HepG2 (cell line): ENCODE measurements at regions of chr9 and their contacts with region 1.

Region 1: DNA sequence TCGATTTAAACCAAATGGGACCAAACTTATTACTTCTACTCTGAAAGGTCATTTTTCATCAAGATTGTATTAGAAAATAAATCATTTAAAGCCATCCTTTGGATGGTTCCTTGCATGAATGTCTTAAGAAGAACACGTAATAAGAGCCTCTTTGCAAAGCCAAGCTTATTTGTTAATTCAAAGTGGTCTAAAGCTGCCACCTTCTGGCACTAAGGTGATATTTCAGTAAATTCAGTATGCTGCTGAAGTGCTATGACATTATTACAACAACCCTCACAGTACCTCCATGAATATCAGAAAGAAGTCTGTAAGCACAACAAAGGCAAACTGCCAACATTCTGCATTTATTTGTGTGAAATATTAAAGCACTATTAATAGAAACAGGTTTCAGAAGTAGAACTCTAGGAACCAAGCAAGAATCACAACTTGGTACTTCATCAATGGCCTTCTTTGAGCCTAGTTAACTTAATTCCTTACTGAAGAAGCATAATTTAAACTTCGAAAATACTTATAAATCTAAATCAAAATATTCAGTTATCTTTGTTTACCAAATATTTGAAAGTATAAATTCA is 53.1 kb upstream of the TYRP1 start:
- DNase-seq: peak; percentile 27
- ATAC-seq: peak; percentile 69; the same call in 2 of the 3 replicates
- H3K4me3 ChIP-seq: no peak overlapping the region
- H3K27ac ChIP-seq: no peak overlapping the region
- H3K4me1 ChIP-seq: no peaks in the 10 kb centered on the region
- H3K27me3 ChIP-seq: no peaks in the 10 kb centered on the region
- CTCF ChIP-seq: peak; percentile 62
- EP300 ChIP-seq: no peak
- POLR2A ChIP-seq: no peak
- RAD21 ChIP-seq: no peak

Region 2: DNA sequence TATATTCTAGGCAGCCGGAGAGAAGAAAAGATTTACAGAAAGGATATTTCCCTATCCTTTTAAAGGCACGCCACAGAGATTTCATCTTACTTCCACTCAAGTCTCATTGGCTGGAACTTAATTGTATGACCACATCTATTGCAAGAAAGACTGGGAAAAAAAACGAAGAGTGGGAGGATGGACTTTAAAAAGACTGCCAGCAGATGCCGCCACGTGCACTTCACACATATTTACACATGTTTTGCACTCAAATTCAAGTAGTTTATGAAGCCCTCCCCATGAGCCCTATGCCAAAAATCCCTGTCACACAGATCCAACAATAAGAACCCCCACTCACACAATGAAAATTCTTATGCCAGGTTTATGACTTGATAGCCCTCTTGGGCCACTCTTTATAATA is 85.5 kb before region 1 on chr9:
- CTCF ChIA-PET with region 1: interaction called, 10 read pairs
- POLR2A ChIA-PET with region 1: no interaction called
- in situ Hi-C with region 1: no loop called
- intact Hi-C with region 1: loop called (anchors 2 kb)
- DNase-seq: peak; percentile 5
- ATAC-seq: peak; percentile 46
- H3K4me3 ChIP-seq: no peak overlapping the region
- H3K27ac ChIP-seq: no peak overlapping the region
- H3K4me1 ChIP-seq: no peaks in the 10 kb centered on the region
- H3K27me3 ChIP-seq: no peaks in the 10 kb centered on the region
- CTCF ChIP-seq: peak; percentile 56
- EP300 ChIP-seq: no peak
- POLR2A ChIP-seq: no peak
- RAD21 ChIP-seq: no peak

Region 3: DNA sequence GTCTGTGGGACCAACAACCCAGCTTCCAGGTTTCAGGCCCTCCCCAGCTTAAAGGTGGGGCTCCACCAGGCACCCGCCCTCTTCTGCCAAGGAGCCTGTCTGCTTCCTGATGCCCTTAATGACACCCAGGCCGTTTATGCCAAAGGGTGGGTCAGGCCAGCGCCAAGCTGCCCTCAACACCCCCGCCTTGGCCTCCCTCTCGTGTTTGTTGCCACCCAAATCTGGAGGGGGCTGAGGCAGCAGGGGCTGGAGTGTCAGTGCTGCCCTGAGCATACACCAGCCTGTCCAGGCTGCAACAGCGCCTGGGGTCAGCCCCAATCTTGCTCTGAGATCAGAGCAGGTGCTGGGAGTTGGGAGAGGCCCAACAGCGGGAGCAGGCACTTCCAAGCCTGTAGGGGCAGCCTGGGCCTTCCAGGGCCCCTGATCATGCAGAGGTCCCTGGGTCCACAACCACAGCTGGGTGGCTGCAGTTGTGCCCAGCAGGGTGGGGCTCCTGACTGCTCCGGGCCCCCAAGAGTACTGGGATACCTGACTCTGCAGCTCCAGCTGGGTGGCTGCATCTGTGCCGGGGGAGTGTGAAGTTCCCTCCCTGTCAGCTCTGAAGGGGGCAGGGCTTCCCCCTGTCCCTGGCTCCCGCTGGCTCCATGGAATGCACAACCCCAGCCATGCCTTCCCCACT is 18.6 kb after region 1 on chr9:
- CTCF ChIA-PET with region 1: no interaction called
- POLR2A ChIA-PET with region 1: no interaction called
- in situ Hi-C with region 1: no loop called
- intact Hi-C with region 1: no loop called
- DNase-seq: no peak
- ATAC-seq: no peak; the same call in 2 of the 3 replicates
- H3K4me3 ChIP-seq: no peak overlapping the region
- H3K27ac ChIP-seq: no peak overlapping the region
- H3K4me1 ChIP-seq: no peaks in the 10 kb centered on the region
- H3K27me3 ChIP-seq: no peaks in the 10 kb centered on the region
- CTCF ChIP-seq: no peak
- EP300 ChIP-seq: no peak
- POLR2A ChIP-seq: no peak
- RAD21 ChIP-seq: no peak

Region 4: GRCh38 chr9:12859704-12860251 is 219.7 kb after region 1 on chr9:
- CTCF ChIA-PET with region 1: no interaction called
- POLR2A ChIA-PET with region 1: no interaction called
- in situ Hi-C with region 1: no loop called
- intact Hi-C with region 1: no loop called
- DNase-seq: no peak
- ATAC-seq: no peak
- H3K4me3 ChIP-seq: no peak overlapping the region
- H3K27ac ChIP-seq: no peak overlapping the region
- H3K4me1 ChIP-seq: no peaks in the 10 kb centered on the region
- H3K27me3 ChIP-seq: no peaks in the 10 kb centered on the region
- CTCF ChIP-seq: no peak
- EP300 ChIP-seq: no peak
- POLR2A ChIP-seq: no peak
- RAD21 ChIP-seq: no peak